Sciatic nerve (tissue), 2 donors: ENCODE measurements at regions of chr13 and their contacts with region 1.

Region 1: DNA sequence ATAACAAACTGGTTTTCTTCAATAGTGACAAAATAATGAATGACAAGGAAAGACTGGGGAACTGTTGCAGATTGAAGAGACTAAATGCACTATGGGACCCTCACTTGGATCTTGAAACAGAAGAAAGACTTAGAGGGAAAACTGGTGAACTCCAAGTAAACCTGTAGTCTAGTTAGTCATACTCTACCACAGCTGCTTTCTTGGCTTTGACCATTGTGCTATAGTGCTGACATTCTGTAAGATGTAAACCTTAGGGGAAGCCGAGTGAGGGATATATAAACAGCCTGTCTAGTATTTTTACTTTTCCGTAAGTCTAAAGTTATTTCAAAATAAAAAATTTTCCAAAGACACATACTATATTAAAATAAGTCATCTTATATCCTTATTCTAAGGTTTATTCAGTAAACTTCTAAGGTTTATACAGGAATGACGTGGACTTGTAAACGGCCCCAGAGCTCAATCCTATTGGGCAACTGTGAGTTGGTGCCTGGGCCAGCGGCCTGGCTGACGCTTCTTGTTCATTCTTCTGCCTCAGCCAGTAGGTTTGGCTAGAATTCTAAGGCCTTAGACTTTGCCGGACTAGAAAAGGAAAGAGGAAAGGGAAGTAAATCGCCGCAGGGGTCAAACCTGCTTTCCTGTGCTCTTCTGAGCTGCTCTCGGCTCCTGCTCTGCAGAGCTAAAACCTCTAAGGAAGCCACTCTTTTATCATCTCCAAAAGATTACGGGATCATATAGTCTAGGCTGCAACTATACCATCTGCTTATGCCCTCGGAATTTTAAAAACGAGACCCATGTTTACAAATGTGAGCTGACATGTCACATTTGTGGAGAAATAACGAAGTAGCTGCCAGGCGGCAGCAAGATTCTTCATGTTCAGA is 33.6 kb upstream of the UBE2L5 start:
- DNase-seq: no peak
- ATAC-seq: peak; percentile 86

Region 2: GRCh38 chr13:30429721-30430694 is 41.4 kb after region 1 on chr13:
- intact Hi-C with region 1: loop called (anchors 2 kb)
- DNase-seq: no peak
- ATAC-seq: peak; percentile 57